Endothelial cell of umbilical vein (primary cell): ENCODE measurements at regions of chr7 and their contacts with region 1.

Region 1: GRCh38 chr7:103573479-103574058 is 127.6 kb upstream of the SLC26A5 start:
- DNase-seq: peak; percentile 58
- H3K4me3 ChIP-seq: no peak overlapping the region
- H3K27ac ChIP-seq: no peak overlapping the region
- H3K4me1 ChIP-seq: no peaks in the 10 kb centered on the region
- H3K27me3 ChIP-seq: peaks cover 13 to 14% of the 10 kb centered on the region in 2 experiments
- CTCF ChIP-seq: peak; percentile 24 to 35
- POLR2A ChIP-seq: no peak

Region 2: GRCh38 chr7:103025341-103025740 is 548.2 kb before region 1 on chr7:
- CTCF ChIA-PET with region 1: no interaction called
- POLR2A ChIA-PET with region 1: no interaction called
- dilution Hi-C with region 1: no loop called
- intact Hi-C with region 1: no loop called
- DNase-seq: no peak
- H3K4me3 ChIP-seq: no peak overlapping the region
- H3K27ac ChIP-seq: no peak overlapping the region
- H3K4me1 ChIP-seq: no peaks in the 10 kb centered on the region
- H3K27me3 ChIP-seq: no peaks in the 10 kb centered on the region
- CTCF ChIP-seq: no peak
- POLR2A ChIP-seq: no peak

Region 3: DNA sequence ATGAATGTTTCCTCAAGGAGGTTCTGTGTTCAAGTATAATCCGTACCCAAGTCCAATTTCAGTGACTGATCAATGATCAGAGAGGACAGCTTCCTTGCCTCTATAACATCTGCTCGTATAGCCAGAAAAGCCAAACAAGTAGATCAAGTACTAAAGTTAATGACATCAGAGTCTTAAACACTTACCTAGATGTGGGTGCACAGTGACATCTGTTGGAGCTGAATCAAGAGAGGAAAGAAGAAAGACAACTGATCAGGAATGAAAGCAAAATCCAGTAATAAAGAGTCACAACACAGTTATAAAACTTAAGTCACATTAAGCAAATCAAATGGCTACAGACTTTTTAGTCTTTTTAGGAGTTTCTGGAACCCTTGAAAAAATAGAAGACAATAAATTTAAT is 179.4 kb after region 1 on chr7:
- CTCF ChIA-PET with region 1: interaction called, 36 read pairs
- POLR2A ChIA-PET with region 1: no interaction called
- dilution Hi-C with region 1: no loop called
- intact Hi-C with region 1: loop called (anchors 1 kb)
- DNase-seq: peak; percentile 21
- H3K4me3 ChIP-seq: no peak overlapping the region
- H3K27ac ChIP-seq: no peak overlapping the region
- H3K4me1 ChIP-seq: no peaks in the 10 kb centered on the region
- H3K27me3 ChIP-seq: no peaks in the 10 kb centered on the region
- CTCF ChIP-seq: no peak
- POLR2A ChIP-seq: no peak

Region 4: GRCh38 chr7:103989785-103990767 is 416.5 kb after region 1 on chr7:
- CTCF ChIA-PET with region 1: interaction called, 3 read pairs
- POLR2A ChIA-PET with region 1: no interaction called
- dilution Hi-C with region 1: no loop called
- intact Hi-C with region 1: loop called (anchors 10 kb)
- DNase-seq: peak; percentile 45
- H3K4me3 ChIP-seq: peak overlapping the region; percentile 41 to 80 (median 64)
- H3K27ac ChIP-seq: no peak overlapping the region
- H3K4me1 ChIP-seq: peaks cover 17% of the 10 kb centered on the region
- H3K27me3 ChIP-seq: peaks cover 30 to 62% of the 10 kb centered on the region in 2 experiments
- CTCF ChIP-seq: peak in 1 of 2 donors; percentile 20
- POLR2A ChIP-seq: no peak

Region 5: GRCh38 chr7:104096683-104097082 is 523.1 kb after region 1 on chr7:
- CTCF ChIA-PET with region 1: interaction called, 36 read pairs
- POLR2A ChIA-PET with region 1: no interaction called
- dilution Hi-C with region 1: no loop called
- intact Hi-C with region 1: no loop called
- DNase-seq: peak; percentile 11
- H3K4me3 ChIP-seq: no peak overlapping the region
- H3K27ac ChIP-seq: no peak overlapping the region
- H3K4me1 ChIP-seq: no peaks in the 10 kb centered on the region
- H3K27me3 ChIP-seq: peaks cover 0 to 2% of the 10 kb centered on the region in 2 experiments
- CTCF ChIP-seq: peak in 1 of 2 donors; percentile 6
- POLR2A ChIP-seq: no peak

Region 6: DNA sequence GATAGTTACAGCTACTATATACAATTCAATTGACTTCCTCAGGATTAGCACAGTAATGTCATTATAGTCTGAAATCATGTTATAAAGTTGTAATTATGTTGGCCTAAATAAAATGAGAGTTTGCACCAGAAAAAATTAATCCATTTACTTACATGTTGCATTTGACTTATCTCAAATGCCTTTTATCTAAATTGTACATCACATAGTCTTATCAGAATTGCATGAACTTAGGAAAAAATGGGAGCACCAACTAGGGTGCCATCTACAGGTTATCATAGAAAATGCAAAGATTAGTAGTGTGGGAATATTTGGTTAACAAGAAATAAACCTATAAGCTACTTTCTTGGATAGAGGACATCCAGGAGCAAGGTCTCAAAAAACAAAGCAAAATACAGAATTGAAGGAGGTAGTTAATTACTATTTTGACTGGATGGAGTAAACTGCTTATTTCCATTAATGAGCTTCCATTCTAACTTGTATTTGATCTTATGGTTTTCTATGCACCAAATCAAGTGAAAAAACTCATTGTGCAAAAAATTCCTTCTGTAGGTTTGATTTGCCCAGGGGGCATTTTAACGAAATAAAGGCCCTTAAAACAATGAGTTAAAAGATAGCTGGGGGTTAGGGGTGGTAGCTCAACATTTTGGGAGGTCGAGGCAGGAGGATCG is 694.3 kb after region 1 on chr7:
- CTCF ChIA-PET with region 1: interaction called, 11 read pairs
- POLR2A ChIA-PET with region 1: no interaction called
- dilution Hi-C with region 1: no loop called
- intact Hi-C with region 1: loop called (anchors 5 kb)
- DNase-seq: peak; percentile 28
- H3K4me3 ChIP-seq: no peak overlapping the region
- H3K27ac ChIP-seq: no peak overlapping the region
- H3K4me1 ChIP-seq: no peaks in the 10 kb centered on the region
- H3K27me3 ChIP-seq: peaks cover 0 to 3% of the 10 kb centered on the region in 2 experiments
- CTCF ChIP-seq: peak; percentile 16 to 32
- POLR2A ChIP-seq: no peak